Calu3 (cell line): ENCODE measurements at regions of chr3 and their contacts with region 1.

Region 1: GRCh38 chr3:190384241-190384863 is 3.6 kb upstream of the CLDN16 start:
- DNase-seq: peak; percentile 89
- H3K4me3 Mint-ChIP-seq: no peak overlapping the region
- H3K27ac Mint-ChIP-seq: peak overlapping the region; percentile 34
- H3K4me1 Mint-ChIP-seq: peaks cover 64% of the 10 kb centered on the region
- H3K27me3 Mint-ChIP-seq: no peaks in the 10 kb centered on the region
- CTCF ChIP-seq: peak; percentile 91

Region 2: GRCh38 chr3:189967254-189967865 is 417.0 kb before region 1 on chr3:
- CTCF ChIA-PET with region 1: interaction called, 19 read pairs
- intact Hi-C with region 1: loop called (anchors 1 kb)
- DNase-seq: peak; percentile 69
- H3K4me3 Mint-ChIP-seq: no peak overlapping the region
- H3K27ac Mint-ChIP-seq: no peak overlapping the region
- H3K4me1 Mint-ChIP-seq: no peaks in the 10 kb centered on the region
- H3K27me3 Mint-ChIP-seq: no peaks in the 10 kb centered on the region
- CTCF ChIP-seq: peak; percentile 89

Region 3: DNA sequence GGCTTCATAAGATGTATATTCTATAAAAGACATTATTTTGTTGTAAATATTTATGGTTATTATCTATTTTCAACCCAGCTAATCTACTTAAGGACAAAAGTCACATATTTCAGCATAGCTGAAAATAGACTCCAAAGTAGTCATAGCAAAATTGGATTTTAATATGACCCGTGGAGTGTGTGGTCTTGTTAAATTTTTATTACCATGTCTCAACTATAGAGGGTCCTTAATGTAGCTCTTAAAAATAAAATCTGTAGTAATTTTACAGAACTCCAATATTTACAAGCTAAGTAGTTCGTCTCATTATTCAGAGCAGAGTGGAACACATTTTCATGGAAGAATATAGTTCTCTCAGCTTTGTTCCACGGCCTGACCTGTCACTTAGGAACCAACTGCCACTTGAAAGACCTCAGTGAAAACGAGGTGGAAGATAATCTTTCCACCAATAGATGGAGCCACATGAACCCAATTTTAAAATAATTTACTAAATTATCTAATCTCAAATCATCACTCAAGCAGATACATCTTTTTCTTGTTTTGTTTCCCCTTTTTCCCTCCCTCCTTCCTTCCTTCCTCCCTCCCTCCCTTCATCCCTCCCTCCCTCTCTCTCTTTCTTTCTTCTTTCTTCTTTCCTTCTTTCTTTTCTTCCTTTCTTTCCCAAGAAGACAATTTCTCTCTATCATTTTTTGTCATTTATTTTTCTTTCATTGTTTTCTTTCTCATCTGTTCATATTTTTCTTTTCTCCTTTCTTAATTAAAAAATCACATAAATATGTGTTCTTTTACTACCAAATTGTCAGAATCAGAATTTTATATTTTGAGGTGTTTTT is 159.3 kb before region 1 on chr3:
- CTCF ChIA-PET with region 1: interaction called, 16 read pairs
- intact Hi-C with region 1: loop called (anchors 1 kb)
- DNase-seq: peak; percentile 37
- H3K4me3 Mint-ChIP-seq: no peak overlapping the region
- H3K27ac Mint-ChIP-seq: no peak overlapping the region
- H3K4me1 Mint-ChIP-seq: peaks cover 7% of the 10 kb centered on the region
- H3K27me3 Mint-ChIP-seq: no peaks in the 10 kb centered on the region
- CTCF ChIP-seq: peak; percentile 58

Region 4: GRCh38 chr3:190345027-190345821 is 39.1 kb before region 1 on chr3:
- CTCF ChIA-PET with region 1: interaction called, 29 read pairs
- intact Hi-C with region 1: no loop called
- DNase-seq: peak; percentile 66
- H3K4me3 Mint-ChIP-seq: peak overlapping the region; percentile 51
- H3K27ac Mint-ChIP-seq: peak overlapping the region; percentile 98
- H3K4me1 Mint-ChIP-seq: peaks cover 51% of the 10 kb centered on the region
- H3K27me3 Mint-ChIP-seq: no peaks in the 10 kb centered on the region
- CTCF ChIP-seq: no peak

Region 5: GRCh38 chr3:190443257-190443656 is 58.9 kb after region 1 on chr3:
- CTCF ChIA-PET with region 1: interaction called, 17 read pairs
- intact Hi-C with region 1: loop called (anchors 1 kb)
- DNase-seq: peak; percentile 48
- H3K4me3 Mint-ChIP-seq: no peak overlapping the region
- H3K27ac Mint-ChIP-seq: peak overlapping the region; percentile 44
- H3K4me1 Mint-ChIP-seq: peaks cover 47% of the 10 kb centered on the region
- H3K27me3 Mint-ChIP-seq: no peaks in the 10 kb centered on the region
- CTCF ChIP-seq: peak; percentile 64

Region 6: DNA sequence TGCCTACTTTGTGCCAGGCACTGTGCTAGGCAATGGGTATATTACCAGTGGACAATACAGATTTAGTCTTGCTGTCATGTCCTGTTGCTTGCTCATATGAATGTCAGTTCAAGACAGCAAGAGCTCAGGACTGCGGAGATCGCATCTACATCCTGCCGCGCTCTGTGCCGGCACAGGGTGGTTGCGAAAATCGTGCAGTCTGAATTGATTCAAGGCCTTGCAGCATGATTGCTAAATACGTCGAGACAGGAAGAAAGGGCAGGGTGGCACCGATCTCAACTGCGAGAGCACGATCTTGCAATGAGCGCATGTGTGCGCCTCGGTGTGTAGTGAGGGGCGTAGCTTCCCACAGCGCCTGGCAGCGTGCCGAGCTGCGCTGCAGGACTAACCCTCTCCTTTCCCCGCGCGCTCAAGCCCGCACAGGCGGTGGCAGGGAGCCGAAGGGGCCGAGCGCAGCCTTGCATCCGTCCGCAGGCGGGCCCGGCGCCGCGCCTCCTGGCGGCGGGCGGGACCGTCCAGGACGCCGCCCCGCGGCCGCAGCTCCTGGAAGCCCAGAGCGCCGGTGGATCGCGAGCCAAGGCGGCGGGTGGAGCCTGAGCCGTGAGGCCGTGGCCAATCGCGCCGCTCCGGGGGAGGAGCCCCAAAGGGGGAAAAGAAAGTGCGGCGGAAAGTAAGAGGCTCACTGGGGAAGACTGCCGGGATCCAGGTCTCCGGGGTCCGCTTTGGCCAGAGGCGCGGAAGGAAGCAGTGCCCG is 129.2 kb after region 1 on chr3 and contains the start of gene IL1RAP:
- CTCF ChIA-PET with region 1: interaction called, 11 read pairs
- intact Hi-C with region 1: loop called (anchors 2 kb)
- DNase-seq: peak; percentile 98
- H3K4me3 Mint-ChIP-seq: peak within 1 kb of the TSS; percentile 90
- H3K27ac Mint-ChIP-seq: peak within 1 kb of the TSS; percentile 90
- H3K4me1 Mint-ChIP-seq: peaks cover 38% of the 10 kb centered on the region
- H3K27me3 Mint-ChIP-seq: no peaks in the 10 kb centered on the region
- CTCF ChIP-seq: peak; percentile 92
- total RNA-seq, gene IL1RAP: 186 and 239 TPM in 2 replicates

Region 7: DNA sequence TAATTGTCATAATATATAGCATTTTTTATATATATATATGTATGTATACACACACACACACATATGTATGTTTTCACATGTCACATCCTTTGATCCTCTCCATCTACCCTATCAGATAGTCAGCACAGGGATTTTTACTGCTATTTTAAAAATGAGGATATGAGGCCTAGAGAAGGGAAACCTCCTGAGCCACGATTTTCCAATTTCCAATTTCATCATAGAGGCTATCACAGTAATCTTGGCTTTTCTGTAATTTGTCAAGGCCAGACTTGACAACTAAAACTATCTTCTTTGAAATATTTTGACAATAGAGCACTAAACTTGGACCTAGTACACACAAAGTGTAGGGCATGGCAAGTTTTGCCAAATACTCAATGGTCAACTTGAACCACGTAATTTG is 172.0 kb after region 1 on chr3:
- CTCF ChIA-PET with region 1: no interaction called
- intact Hi-C with region 1: no loop called
- DNase-seq: no peak
- H3K4me3 Mint-ChIP-seq: no peak overlapping the region
- H3K27ac Mint-ChIP-seq: peak overlapping the region; percentile 99
- H3K4me1 Mint-ChIP-seq: peaks cover 63% of the 10 kb centered on the region
- H3K27me3 Mint-ChIP-seq: no peaks in the 10 kb centered on the region
- CTCF ChIP-seq: no peak

Region 8: GRCh38 chr3:191051037-191051436 is 666.7 kb after region 1 on chr3:
- CTCF ChIA-PET with region 1: no interaction called
- intact Hi-C with region 1: loop called (anchors 1 kb)
- DNase-seq: no peak
- H3K4me3 Mint-ChIP-seq: no peak overlapping the region
- H3K27ac Mint-ChIP-seq: no peak overlapping the region
- H3K4me1 Mint-ChIP-seq: no peaks in the 10 kb centered on the region
- H3K27me3 Mint-ChIP-seq: no peaks in the 10 kb centered on the region
- CTCF ChIP-seq: peak; percentile 39